ENCODE measurements at regions of chr6 and their contacts with region 1.

Region 1: DNA sequence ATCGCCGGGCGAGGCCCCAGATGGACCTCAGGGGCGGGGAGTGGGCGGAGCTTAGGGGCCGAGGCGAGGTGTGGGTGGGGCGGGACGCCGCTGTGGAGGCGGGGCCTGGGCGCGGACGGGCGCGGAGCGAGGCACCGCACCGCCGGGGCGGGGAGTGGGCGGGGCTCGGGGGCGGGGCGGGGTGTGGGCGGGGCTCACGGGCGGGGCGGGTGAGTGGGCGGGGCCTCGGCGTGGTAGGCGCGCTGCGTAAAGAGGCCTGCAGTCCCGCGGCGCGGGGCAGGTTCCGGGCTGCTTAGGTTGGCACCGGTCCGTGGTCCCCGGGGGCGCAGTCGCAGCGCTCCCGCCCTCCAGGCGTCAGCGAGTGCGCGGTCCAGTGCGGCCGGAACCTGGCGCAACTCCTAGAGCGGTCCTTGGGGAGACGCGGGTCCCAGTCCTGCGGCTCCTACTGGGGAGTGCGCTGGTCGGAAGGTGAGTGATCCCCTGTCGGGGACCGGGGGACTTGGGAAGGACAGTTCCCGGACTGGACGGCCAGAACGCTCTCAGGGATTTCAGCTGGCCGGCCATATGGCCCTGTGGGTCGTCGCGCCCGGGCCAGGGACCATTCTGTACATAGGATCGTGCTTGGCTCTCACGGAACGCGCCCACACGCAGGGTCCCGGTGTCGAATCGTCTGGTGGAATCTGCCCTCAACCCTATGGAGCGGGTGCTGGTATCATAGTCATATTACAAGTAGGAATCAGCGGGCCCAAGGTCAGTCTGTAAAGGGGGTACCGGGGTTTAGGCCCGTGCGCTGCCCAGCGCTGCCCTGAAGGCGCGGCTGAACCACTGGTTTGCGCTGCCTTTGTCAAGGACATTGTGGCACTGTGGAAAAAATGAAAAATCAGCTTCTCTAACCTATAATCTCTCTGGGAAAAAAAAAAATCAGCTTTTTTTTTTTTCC is at the start of gene NQO2:
- DNase-seq: peak; percentile 83 to 96 (median 91)
- ATAC-seq: peak; percentile 72
- H3K4me3 ChIP-seq: peak within 1 kb of the TSS; percentile 83 to 98
- H3K4me3 Mint-ChIP-seq: peak within 1 kb of the TSS; percentile 91
- H3K27ac ChIP-seq: peak within 1 kb of the TSS; percentile 70 to 75
- H3K27ac Mint-ChIP-seq: peak within 1 kb of the TSS; percentile 92
- H3K4me1 ChIP-seq: peaks cover 13% of the 10 kb centered on the region
- H3K4me1 Mint-ChIP-seq: peaks cover 15% of the 10 kb centered on the region
- H3K27me3 ChIP-seq: no peaks in the 10 kb centered on the region
- H3K27me3 Mint-ChIP-seq: no peaks in the 10 kb centered on the region
- CTCF ChIP-seq: no peak
- total RNA-seq, gene NQO2: 3.8 to 5.5 TPM

Region 2: GRCh38 chr6:1949538-1949937 is 1050.3 kb before region 1 on chr6:
- CTCF ChIA-PET with region 1: no interaction called
- POLR2A ChIA-PET with region 1: no interaction called
- intact Hi-C with region 1: no loop called
- DNase-seq: no peak
- ATAC-seq: no peak
- H3K4me3 ChIP-seq: no peak overlapping the region
- H3K4me3 Mint-ChIP-seq: no peak overlapping the region
- H3K27ac ChIP-seq: no peak overlapping the region
- H3K27ac Mint-ChIP-seq: no peak overlapping the region
- H3K4me1 ChIP-seq: no peaks in the 10 kb centered on the region
- H3K4me1 Mint-ChIP-seq: no peaks in the 10 kb centered on the region
- H3K27me3 ChIP-seq: no peaks in the 10 kb centered on the region
- H3K27me3 Mint-ChIP-seq: no peaks in the 10 kb centered on the region
- CTCF ChIP-seq: no peak

Region 3: DNA sequence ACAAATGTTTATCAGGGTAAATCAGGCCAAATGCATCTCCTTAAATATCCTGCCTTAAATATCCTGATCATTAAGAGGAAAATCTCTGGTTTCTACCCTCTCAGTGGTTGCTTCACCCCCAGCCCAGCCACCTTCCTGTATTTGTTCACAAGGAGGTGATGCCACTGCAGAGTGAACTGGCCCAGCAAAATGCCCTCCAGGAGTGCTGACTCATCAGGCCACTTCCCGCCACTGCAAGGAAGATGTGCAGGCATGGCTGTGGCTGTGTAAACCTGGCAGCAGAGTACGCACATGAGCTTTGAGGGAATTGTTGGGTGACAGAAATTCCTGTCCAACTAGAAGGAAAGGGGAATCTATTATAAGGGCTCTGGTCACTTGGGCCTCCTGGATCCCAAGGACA is 13.6 kb after region 1 on chr6:
- CTCF ChIA-PET with region 1: interaction called, 4 read pairs
- POLR2A ChIA-PET with region 1: interaction called, 11 read pairs
- intact Hi-C with region 1: no loop called
- DNase-seq: peak in 1 of 9 experiments; percentile 20
- ATAC-seq: no peak
- H3K4me3 ChIP-seq: no peak overlapping the region
- H3K4me3 Mint-ChIP-seq: no peak overlapping the region
- H3K27ac ChIP-seq: no peak overlapping the region
- H3K27ac Mint-ChIP-seq: no peak overlapping the region
- H3K4me1 ChIP-seq: no peaks in the 10 kb centered on the region
- H3K4me1 Mint-ChIP-seq: no peaks in the 10 kb centered on the region
- H3K27me3 ChIP-seq: no peaks in the 10 kb centered on the region
- H3K27me3 Mint-ChIP-seq: no peaks in the 10 kb centered on the region
- CTCF ChIP-seq: no peak

Region 4: DNA sequence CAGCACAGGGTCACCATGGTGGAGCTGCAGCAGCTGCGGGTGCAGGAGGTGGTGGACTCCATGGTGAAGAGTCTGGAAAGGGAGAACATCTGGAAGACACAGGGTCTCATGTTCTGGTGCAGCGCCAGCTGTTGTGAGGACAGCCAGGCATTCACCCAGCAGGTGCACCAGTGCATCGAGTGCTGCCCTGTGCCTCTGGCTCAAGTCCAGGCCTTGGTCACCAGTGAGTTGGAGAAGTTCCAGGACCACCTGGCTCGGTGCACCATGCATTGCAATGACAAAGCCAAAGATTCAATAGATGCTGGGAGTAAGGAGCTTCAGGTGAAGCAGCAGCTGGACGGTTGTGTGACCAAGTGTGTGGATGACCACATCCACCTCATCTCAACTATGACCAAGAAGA is 45.5 kb after region 1 on chr6:
- CTCF ChIA-PET with region 1: interaction called, 10 read pairs
- POLR2A ChIA-PET with region 1: no interaction called
- intact Hi-C with region 1: no loop called
- DNase-seq: no peak
- ATAC-seq: no peak
- H3K4me3 ChIP-seq: no peak overlapping the region
- H3K4me3 Mint-ChIP-seq: no peak overlapping the region
- H3K27ac ChIP-seq: no peak overlapping the region
- H3K27ac Mint-ChIP-seq: no peak overlapping the region
- H3K4me1 ChIP-seq: no peaks in the 10 kb centered on the region
- H3K4me1 Mint-ChIP-seq: no peaks in the 10 kb centered on the region
- H3K27me3 ChIP-seq: no peaks in the 10 kb centered on the region
- H3K27me3 Mint-ChIP-seq: no peaks in the 10 kb centered on the region
- CTCF ChIP-seq: no peak

Region 5: GRCh38 chr6:3058957-3059356 is 59.1 kb after region 1 on chr6:
- CTCF ChIA-PET with region 1: interaction called, 21 read pairs
- POLR2A ChIA-PET with region 1: interaction called, 23 read pairs
- intact Hi-C with region 1: loop called in 1 of 2 experiments (anchors 1 kb)
- DNase-seq: no peak
- ATAC-seq: no peak
- H3K4me3 ChIP-seq: no peak overlapping the region
- H3K4me3 Mint-ChIP-seq: no peak overlapping the region
- H3K27ac ChIP-seq: no peak overlapping the region
- H3K27ac Mint-ChIP-seq: no peak overlapping the region
- H3K4me1 ChIP-seq: no peaks in the 10 kb centered on the region
- H3K4me1 Mint-ChIP-seq: peaks cover 13% of the 10 kb centered on the region
- H3K27me3 ChIP-seq: no peaks in the 10 kb centered on the region
- H3K27me3 Mint-ChIP-seq: no peaks in the 10 kb centered on the region
- CTCF ChIP-seq: no peak

Region 6: GRCh38 chr6:3118353-3119039 is 118.6 kb after region 1 on chr6 and contains the start of gene BPHL:
- CTCF ChIA-PET with region 1: no interaction called
- POLR2A ChIA-PET with region 1: no interaction called
- intact Hi-C with region 1: loop called (anchors 1 to 2 kb)
- DNase-seq: peak; percentile 97 to 100 (median 99)
- ATAC-seq: peak; percentile 95
- H3K4me3 ChIP-seq: peak within 1 kb of the TSS; percentile 63 to 80
- H3K4me3 Mint-ChIP-seq: peak within 1 kb of the TSS; percentile 92
- H3K27ac ChIP-seq: peak within 1 kb of the TSS; percentile 85 to 90
- H3K27ac Mint-ChIP-seq: peak within 1 kb of the TSS; percentile 96
- H3K4me1 ChIP-seq: peaks cover 12% of the 10 kb centered on the region
- H3K4me1 Mint-ChIP-seq: peaks cover 13% of the 10 kb centered on the region
- H3K27me3 ChIP-seq: no peaks in the 10 kb centered on the region
- H3K27me3 Mint-ChIP-seq: no peaks in the 10 kb centered on the region
- CTCF ChIP-seq: no peak
- total RNA-seq, gene BPHL: 3.7 to 5.5 TPM

Region 7: GRCh38 chr6:3162565-3163247 is 162.8 kb after region 1 on chr6:
- CTCF ChIA-PET with region 1: no interaction called
- POLR2A ChIA-PET with region 1: no interaction called
- intact Hi-C with region 1: loop called in 1 of 2 experiments (anchors 1 kb)
- DNase-seq: peak; percentile 12 to 84 (median 63)
- ATAC-seq: peak; percentile 47
- H3K4me3 ChIP-seq: peak overlapping the region; percentile 71 to 79
- H3K4me3 Mint-ChIP-seq: peak overlapping the region; percentile 84
- H3K27ac ChIP-seq: peak overlapping the region in 1 of 2 experiments; percentile 72
- H3K27ac Mint-ChIP-seq: peak overlapping the region; percentile 86
- H3K4me1 ChIP-seq: peaks cover 33% of the 10 kb centered on the region
- H3K4me1 Mint-ChIP-seq: peaks cover 37% of the 10 kb centered on the region
- H3K27me3 ChIP-seq: no peaks in the 10 kb centered on the region
- H3K27me3 Mint-ChIP-seq: no peaks in the 10 kb centered on the region
- CTCF ChIP-seq: no peak

Measured in CD8-positive, alpha-beta T cell (primary cell).